Activated CD4-positive, alpha-beta T cell treated with anti-CD3 and anti-CD28 coated beads for 36 hours (primary cell): ENCODE measurements at regions of chr1 and their contacts with region 1.

Region 1: DNA sequence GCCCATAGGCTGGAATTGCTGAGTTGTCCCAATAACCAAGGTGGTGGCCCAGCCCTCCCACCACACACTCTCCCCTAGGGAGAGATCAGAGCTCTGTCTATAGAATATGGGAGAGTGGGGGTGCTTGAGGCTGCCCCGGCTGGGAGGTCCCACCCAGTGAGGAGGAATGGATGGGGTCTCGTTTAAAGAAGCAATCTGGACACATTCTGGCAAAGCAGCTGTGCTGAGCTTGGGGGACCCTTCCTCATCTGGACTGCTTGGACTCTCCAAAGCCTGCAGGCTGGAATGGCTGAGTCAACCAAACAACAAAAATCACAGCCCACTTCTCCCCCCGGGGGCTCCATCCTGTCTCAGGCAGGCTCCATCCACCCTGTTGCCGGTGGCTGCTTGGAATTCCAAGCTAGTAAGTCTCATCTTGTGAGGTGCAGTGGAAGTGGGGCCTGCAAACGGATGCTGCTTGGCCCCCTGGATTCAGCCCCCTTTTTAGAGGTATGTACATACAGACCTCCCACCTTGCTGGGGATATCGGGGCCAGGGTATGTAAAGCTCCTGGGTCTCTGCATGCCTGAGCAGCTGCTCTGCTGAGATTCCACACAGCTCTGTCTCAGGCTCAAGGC is 67.1 kb upstream of the FAM78B start:
- DNase-seq: no peak
- ATAC-seq: no peak
- H3K4me3 Mint-ChIP-seq: no peak overlapping the region
- H3K27ac Mint-ChIP-seq: no peak overlapping the region
- H3K4me1 Mint-ChIP-seq: no peaks in the 10 kb centered on the region
- H3K27me3 Mint-ChIP-seq: no peaks in the 10 kb centered on the region

Region 2: GRCh38 chr1:166221316-166221715 is 12.5 kb before region 1 on chr1:
- CTCF ChIA-PET with region 1: no interaction called
- POLR2A ChIA-PET with region 1: no interaction called
- intact Hi-C with region 1: loop called in 1 of 2 experiments (anchors 2 kb)
- DNase-seq: no peak
- ATAC-seq: no peak
- H3K4me3 Mint-ChIP-seq: no peak overlapping the region
- H3K27ac Mint-ChIP-seq: no peak overlapping the region
- H3K4me1 Mint-ChIP-seq: no peaks in the 10 kb centered on the region
- H3K27me3 Mint-ChIP-seq: no peaks in the 10 kb centered on the region

Region 3: GRCh38 chr1:166253076-166253779 is 19.4 kb after region 1 on chr1:
- CTCF ChIA-PET with region 1: no interaction called
- POLR2A ChIA-PET with region 1: no interaction called
- intact Hi-C with region 1: loop called in 1 of 2 experiments (anchors 2 kb)
- DNase-seq: no peak
- ATAC-seq: no peak
- H3K4me3 Mint-ChIP-seq: no peak overlapping the region
- H3K27ac Mint-ChIP-seq: no peak overlapping the region
- H3K4me1 Mint-ChIP-seq: no peaks in the 10 kb centered on the region
- H3K27me3 Mint-ChIP-seq: no peaks in the 10 kb centered on the region